ENCODE measurements at regions of chr19 and their contacts with region 1.

Region 1: GRCh38 chr19:18846862-18847548 is 15.2 kb downstream of the UPF1 start:
- DNase-seq: peak; percentile 84 to 94 (median 92)
- ATAC-seq: peak; percentile 72 to 76
- H3K4me3 ChIP-seq: no peak overlapping the region
- H3K27ac ChIP-seq: no peak overlapping the region
- H3K4me1 ChIP-seq: peaks cover 21% of the 10 kb centered on the region
- H3K27me3 ChIP-seq: no peaks in the 10 kb centered on the region

Region 2: DNA sequence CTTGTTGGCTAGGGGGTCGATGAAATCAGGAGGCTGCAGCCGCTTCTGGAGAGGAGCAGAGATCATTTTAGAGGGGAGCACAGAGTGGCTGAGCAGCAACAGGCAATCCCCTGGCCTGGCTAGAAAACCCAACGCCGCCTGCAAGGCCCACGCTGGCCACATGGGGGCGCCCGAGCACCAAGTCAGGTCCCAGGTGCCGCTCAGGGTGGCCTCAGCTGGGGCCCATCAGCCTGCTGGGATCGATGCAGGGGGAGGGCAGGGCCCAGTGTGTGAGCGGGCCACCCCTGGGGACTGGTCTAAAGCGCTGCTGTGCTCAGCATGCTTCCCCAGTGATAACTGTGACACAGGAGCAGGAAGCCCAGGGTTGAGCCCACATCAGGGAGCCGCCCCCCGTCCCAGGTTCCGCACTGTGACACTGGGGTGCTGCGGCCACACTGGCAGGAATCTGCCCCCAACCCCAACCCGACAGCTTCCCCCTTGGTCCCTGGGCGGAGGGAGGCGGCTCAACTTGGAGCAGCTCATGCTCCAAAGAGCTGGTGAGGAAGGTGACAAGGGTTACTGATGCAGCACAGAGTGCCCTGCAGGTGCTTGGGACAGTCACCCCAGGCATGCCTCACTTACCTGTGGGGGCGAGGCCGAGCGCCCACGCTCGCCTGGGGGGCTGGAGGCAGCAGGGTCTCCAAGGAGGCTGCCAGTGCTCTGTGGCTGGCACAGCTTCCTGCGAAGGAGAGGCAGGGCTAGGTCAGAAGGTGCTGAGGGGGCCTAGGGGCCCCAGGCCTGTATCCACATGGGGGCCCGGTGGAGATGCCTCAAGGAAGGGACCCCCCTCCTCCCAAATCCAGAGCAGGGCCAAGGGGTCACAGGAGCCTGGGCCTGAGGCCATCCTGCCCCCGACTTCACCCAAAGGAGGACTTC is 395.8 kb before region 1 on chr19:
- intact Hi-C with region 1: loop called in 2 of 4 experiments (anchors 10 kb)
- DNase-seq: peak; percentile 84 to 95 (median 95)
- ATAC-seq: peak; percentile 83 to 84
- H3K4me3 ChIP-seq: no peak overlapping the region
- H3K27ac ChIP-seq: no peak overlapping the region
- H3K4me1 ChIP-seq: no peaks in the 10 kb centered on the region
- H3K27me3 ChIP-seq: no peaks in the 10 kb centered on the region

Region 3: GRCh38 chr19:18588611-18589379 is 258.2 kb before region 1 on chr19 and contains the start of gene REX1BD:
- intact Hi-C with region 1: loop called in 3 of 4 experiments (anchors 5 kb)
- DNase-seq: peak; percentile 90 to 96 (median 96)
- ATAC-seq: peak; percentile 93
- H3K4me3 ChIP-seq: peak within 1 kb of the TSS; percentile 51
- H3K27ac ChIP-seq: peak within 1 kb of the TSS; percentile 76
- H3K4me1 ChIP-seq: peaks cover 5% of the 10 kb centered on the region
- H3K27me3 ChIP-seq: no peaks in the 10 kb centered on the region
- total RNA-seq, gene REX1BD: 71.0 to 90.7 (median 77.1) TPM

Region 4: GRCh38 chr19:18683213-18683939 is 163.6 kb before region 1 on chr19 and contains the start of gene CRTC1:
- intact Hi-C with region 1: loop called in 1 of 4 experiments (anchors 10 kb)
- DNase-seq: peak; percentile 91 to 97 (median 95)
- ATAC-seq: peak; percentile 84 to 85
- H3K4me3 ChIP-seq: peak within 1 kb of the TSS; percentile 84
- H3K27ac ChIP-seq: peak within 1 kb of the TSS; percentile 89
- H3K4me1 ChIP-seq: peaks cover 7% of the 10 kb centered on the region
- H3K27me3 ChIP-seq: no peaks in the 10 kb centered on the region
- total RNA-seq, gene CRTC1: 9.2 to 15.1 (median 13.6) TPM

Region 5: GRCh38 chr19:18895038-18895823 is 48.2 kb after region 1 on chr19:
- intact Hi-C with region 1: no loop called
- DNase-seq: peak in 2 of 3 donors; percentile 73 to 80
- ATAC-seq: peak; percentile 48
- H3K4me3 ChIP-seq: peak overlapping the region; percentile 46
- H3K27ac ChIP-seq: no peak overlapping the region
- H3K4me1 ChIP-seq: peaks cover 5% of the 10 kb centered on the region
- H3K27me3 ChIP-seq: no peaks in the 10 kb centered on the region